ENCODE measurements at regions of chr9 and their contacts with region 1.

Region 1: GRCh38 chr9:72022841-72023240 is 37.6 kb downstream of the C9orf57 start:
- DNase-seq: no peak
- CTCF ChIP-seq: no peak

Region 2: DNA sequence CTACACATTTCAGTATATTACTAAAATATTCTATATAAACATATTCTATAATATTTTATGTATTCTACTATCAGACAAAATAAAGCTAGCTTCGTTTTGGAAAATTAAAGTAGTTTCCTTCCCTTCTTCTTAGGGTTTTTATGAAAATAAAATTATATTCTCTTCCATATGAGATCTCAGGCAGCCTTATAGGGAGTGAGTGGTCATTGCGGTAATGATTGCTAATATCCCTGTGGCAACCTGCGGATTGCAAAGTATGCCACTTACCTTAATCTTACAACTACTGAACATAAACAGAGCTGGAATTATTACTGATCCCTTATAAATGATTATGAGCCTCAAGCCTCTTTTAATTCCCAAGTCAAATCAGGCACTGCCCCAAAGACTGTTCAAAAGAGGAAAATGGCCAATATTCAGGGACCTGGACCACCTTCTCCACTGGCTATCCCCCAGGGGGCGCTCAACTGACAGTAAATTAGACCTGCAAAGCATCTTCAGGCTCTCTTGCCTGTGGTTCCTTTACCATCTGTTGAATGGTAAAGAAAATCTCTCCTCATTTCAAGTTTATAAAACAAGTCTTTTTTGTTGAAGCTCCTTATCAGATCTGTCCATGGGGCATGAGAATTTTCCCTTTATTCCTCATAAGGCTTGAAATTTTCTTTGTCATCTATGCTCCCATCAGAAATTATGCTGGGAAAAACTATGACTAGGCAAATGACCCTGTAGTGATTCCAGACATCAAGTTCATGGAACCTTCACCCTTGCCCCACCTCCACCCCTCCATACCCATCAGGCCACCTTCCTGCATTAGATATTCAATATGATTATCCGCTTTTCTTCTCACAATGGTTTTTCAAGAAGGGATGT is 418.4 kb before region 1 on chr9:
- CTCF ChIA-PET with region 1: interaction called, 18 read pairs
- POLR2A ChIA-PET with region 1: no interaction called
- DNase-seq: peak; percentile 38
- CTCF ChIP-seq: peak; percentile 72

Region 3: DNA sequence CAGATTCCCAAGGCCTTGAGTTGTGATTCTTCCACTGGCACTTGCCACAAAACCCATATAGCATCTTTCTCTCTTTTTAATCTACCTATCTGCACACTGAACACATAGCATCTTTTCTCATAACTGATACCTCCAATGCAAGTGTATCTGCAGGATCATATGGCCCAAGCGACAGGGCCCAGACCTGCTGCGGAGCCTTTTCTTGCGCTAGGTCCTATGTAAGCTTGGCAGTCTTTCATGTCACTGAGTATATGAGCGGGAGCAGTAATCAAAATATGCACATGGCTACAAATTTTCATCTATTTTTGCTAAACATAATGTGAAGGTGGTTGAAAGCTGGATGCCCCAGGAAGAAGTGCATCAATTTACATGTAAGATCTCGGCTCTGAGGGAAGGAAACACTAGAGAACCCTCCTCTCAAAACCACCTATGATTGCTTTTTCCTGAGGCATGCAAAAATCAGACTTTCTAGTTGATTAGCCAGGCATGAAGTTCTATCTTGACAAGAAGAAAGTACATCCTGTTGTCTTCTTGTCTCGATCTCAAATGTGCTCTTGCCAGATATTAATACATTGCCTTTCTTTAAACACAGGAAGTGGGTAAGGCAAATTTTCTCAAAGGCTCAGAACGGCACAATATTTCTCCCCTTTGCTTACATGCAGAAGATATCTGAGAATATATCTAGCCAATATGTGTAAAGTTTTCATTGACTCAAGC is 227.6 kb before region 1 on chr9:
- CTCF ChIA-PET with region 1: interaction called, 31 read pairs
- POLR2A ChIA-PET with region 1: no interaction called
- DNase-seq: peak; percentile 55
- CTCF ChIP-seq: no peak

Region 4: DNA sequence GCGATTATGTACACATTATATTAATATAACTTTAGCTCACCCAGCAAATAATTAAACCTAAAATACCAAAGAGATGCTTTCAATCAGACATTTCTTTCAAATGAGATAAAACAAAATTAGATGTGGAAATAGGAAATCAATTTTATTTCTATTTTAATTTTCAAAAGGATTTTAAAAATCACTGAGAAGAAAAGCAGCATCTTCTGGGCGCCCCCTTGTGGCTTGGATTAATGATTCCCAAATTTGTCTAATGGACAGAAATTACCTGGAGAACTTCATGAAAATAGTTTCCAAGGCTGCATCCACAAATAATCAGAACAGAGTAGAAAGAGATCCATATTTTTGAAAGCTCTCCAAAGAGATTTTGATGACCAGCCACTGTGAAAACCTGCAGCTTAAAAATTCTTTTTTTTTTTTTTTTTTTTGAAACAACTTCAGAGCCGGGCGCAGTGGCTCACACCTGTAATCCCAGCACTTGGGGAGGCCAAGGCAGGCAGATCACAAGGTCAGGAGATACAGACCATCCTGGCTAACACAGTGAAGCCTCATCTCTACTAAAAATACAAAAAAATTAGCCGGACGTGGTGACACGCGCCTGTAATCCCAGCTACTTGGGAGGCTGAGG is 203.6 kb before region 1 on chr9:
- CTCF ChIA-PET with region 1: interaction called, 47 read pairs
- POLR2A ChIA-PET with region 1: no interaction called
- DNase-seq: no peak
- CTCF ChIP-seq: peak; percentile 74

Region 5: DNA sequence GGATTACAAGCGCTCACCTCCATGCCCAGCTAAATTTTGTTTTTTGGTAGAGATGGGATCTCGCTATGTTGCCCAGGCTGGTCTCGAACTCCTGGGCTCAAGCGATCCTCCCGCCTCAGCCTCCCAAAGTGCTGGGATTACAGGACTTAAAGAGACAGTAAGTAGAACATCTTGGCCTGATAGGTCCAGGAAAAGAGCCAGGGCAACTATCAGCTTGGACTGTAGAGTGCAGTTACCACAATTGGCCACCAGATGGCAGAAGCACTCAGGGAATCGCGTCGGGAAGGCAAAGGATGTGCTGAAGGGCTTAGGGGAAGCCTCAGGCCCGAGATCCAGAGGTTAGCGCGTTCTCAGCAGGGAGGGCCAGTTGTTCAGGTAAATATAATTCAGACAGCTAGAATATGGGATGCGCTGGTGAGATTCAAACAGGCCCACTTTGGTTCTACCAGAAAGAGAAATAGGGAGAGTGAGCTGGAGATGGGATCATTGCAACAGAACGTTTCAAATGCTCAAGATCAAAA is 16.1 kb after region 1 on chr9:
- CTCF ChIA-PET with region 1: interaction called, 90 read pairs
- POLR2A ChIA-PET with region 1: no interaction called
- DNase-seq: peak; percentile 79
- CTCF ChIP-seq: peak; percentile 95

Region 6: DNA sequence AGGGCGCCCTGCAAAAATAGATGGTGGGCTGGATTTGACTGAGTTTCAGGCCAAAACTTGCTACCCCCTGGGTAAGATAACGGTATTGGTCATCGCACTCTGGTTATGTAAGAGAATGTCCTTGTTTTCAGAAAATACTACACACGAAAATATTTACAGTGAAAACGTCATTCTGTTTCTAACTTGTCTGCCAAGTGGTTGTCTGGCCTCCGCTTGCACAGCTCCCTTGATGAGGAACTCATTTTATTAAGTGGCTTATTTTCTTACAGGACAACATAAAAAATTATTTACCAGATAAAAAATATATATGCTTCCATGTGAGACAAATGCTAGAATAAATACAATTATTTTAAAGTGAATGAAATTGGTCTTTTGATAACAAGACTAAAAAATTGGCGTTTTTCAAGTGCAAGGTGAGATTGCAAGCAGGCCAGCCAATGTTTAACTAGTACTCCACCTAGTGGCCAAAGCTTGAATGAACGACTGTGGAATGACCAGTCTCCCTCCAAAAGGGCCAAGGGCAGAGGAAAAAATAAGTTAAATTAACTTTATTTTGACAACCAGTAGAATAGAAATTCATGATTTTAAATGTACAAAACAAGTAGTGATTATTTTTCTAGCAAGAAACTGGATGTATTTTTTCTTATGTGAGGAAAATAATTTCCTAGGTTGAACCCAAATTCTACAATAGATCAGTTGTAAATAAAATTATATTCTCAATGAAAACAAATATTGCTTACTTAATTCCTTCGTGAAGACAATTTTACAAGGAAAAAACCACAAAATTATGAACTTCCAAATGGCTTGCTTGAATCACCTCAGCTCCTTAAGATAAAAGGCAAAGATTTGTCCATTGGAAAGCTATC is 249.0 kb after region 1 on chr9:
- CTCF ChIA-PET with region 1: interaction called, 12 read pairs
- POLR2A ChIA-PET with region 1: no interaction called
- DNase-seq: peak; percentile 71
- CTCF ChIP-seq: peak; percentile 84

Measured in GM10248 (cell line).